PC-9 (cell line): ENCODE measurements at regions of chr1 and their contacts with region 1.

Region 1: DNA sequence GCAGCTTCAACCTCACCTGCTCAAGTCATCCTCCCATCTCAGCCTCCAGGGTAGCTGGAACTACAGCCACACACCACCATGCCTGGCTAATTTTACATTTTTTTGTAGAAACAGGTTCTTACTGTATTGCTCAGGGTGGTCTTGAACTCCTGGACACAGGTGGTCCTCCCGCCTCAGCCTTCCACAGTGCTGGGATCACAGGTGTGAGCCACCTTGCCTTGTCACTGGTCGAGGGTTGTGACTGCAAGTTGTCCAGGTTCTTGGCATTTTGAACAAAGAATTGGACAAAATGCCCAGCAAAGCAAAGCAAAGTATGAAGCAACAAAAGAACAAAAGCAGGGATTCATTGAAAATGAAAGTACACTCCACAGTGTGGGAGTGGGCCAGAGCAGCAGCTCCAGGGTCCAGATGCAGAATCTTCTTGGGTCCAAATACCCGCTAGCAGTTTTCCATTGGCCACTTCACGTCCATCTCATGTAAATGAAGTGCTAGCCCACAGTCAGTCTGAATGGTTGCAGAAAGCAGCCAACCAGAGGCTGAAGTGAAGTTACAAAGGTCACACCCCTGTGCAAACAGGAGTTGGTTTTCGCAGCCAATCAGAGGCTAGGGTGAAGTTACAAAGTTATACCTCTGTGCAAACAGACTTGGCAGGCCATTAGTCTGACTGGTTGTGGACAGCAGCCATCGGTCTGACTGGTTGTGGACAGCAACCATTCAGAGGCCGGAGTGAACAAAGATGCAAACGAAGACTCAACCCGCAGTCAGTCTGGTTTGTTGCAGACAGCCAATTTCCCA is 109.5 kb upstream of the KIF26B start:
- DNase-seq: no peak
- H3K4me3 ChIP-seq: no peak overlapping the region
- H3K27ac ChIP-seq: no peak overlapping the region
- H3K4me1 ChIP-seq: no peaks in the 10 kb centered on the region
- H3K27me3 ChIP-seq: peaks cover 36% of the 10 kb centered on the region; the same call in 1 of the 2 replicates
- CTCF ChIP-seq: no peak

Region 2: DNA sequence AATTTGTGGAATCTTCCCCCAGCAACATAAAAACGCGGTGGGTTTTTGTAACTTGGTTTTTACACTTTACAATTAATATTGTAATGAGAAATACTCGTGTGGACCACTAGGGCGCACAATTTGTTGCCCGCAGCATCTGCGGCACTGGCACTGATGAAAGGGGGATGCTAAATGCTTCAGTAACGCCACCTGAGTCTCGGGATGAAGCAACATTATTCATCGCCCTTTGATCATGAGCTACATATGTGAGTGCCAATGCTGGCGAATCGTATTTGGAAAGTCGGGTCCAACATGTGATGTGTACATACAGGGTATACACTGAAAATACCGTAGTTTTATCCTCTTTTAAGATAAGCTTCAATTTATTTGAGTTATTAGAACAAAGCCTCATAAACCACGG is 244.0 kb before region 1 on chr1:
- CTCF ChIA-PET with region 1: interaction called, 10 read pairs
- POLR2A ChIA-PET with region 1: interaction called, 6 read pairs
- intact Hi-C with region 1: loop called (anchors 1 kb)
- DNase-seq: peak in 1 of 2 experiments; percentile 10
- H3K4me3 ChIP-seq: no peak overlapping the region
- H3K27ac ChIP-seq: no peak overlapping the region
- H3K4me1 ChIP-seq: no peaks in the 10 kb centered on the region
- H3K27me3 ChIP-seq: no peaks in the 10 kb centered on the region
- CTCF ChIP-seq: peak; percentile 76

Region 3: DNA sequence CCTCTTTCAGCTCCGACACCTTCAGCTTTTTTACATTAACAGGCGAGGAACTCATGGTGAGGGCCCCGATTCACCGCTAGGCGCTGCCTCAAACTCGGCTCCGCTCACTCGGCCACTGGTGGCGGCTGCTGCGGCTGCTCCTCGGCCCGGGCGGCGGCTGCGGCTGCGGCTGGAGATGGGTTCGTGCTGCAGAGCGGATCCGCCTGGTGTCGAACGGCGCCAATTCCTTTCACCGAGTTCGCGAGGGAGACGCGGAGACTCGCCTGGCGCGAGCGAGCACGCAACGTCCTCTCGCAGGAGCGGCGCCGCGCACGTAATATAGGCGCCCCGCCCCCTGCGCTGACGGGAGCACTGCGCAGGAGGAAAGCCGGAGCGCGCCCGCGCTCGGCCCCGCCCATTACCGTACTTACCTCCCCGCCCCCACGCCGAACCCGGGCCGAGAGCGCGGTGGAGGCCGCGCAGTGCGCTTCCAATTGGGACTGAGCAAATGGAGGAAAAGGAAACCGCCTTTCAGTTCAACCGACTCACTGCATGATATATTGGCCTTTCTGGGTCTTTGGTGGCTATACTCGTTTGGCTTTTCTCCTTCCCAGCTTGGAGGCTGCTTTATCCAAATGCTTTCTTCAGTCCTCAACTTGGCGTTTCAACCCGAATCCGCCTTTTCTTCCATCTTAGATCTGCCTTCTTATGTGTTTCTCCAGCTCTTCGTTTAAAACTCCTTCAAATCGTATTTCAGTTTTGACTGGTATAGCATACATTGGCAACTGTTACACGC is 180.8 kb before region 1 on chr1 and contains the start of gene HNRNPU:
- CTCF ChIA-PET with region 1: interaction called, 4 read pairs
- POLR2A ChIA-PET with region 1: interaction called, 5 read pairs
- intact Hi-C with region 1: loop called (anchors 1 kb)
- DNase-seq: peak; percentile 84 to 97
- H3K4me3 ChIP-seq: peak within 1 kb of the TSS; percentile 98
- H3K27ac ChIP-seq: peak within 1 kb of the TSS; percentile 70
- H3K4me1 ChIP-seq: peaks cover 31% of the 10 kb centered on the region
- H3K27me3 ChIP-seq: no peaks in the 10 kb centered on the region
- CTCF ChIP-seq: peak; percentile 47; the same call in 1 of the 2 replicates
- total RNA-seq, gene HNRNPU: 291 and 376 TPM in 2 replicates

Region 4: GRCh38 chr1:244970661-244971551 is 74.4 kb before region 1 on chr1:
- CTCF ChIA-PET with region 1: no interaction called
- POLR2A ChIA-PET with region 1: no interaction called
- intact Hi-C with region 1: loop called (anchors 1 kb)
- DNase-seq: peak; percentile 80 to 93
- H3K4me3 ChIP-seq: peak overlapping the region; percentile 65
- H3K27ac ChIP-seq: peak overlapping the region; percentile 97
- H3K4me1 ChIP-seq: peaks cover 25% of the 10 kb centered on the region
- H3K27me3 ChIP-seq: no peaks in the 10 kb centered on the region
- CTCF ChIP-seq: peak; percentile 65; the same call in 1 of the 2 replicates

Region 5: GRCh38 chr1:245495681-245496080 is 450.4 kb after region 1 on chr1:
- CTCF ChIA-PET with region 1: no interaction called
- POLR2A ChIA-PET with region 1: no interaction called
- intact Hi-C with region 1: loop called (anchors 2 kb)
- DNase-seq: no peak
- H3K4me3 ChIP-seq: no peak overlapping the region
- H3K27ac ChIP-seq: no peak overlapping the region
- H3K4me1 ChIP-seq: no peaks in the 10 kb centered on the region
- H3K27me3 ChIP-seq: peaks cover 52% of the 10 kb centered on the region
- CTCF ChIP-seq: no peak